GM13976 (cell line): ENCODE measurements at regions of chr1 and their contacts with region 1.

Region 1: DNA sequence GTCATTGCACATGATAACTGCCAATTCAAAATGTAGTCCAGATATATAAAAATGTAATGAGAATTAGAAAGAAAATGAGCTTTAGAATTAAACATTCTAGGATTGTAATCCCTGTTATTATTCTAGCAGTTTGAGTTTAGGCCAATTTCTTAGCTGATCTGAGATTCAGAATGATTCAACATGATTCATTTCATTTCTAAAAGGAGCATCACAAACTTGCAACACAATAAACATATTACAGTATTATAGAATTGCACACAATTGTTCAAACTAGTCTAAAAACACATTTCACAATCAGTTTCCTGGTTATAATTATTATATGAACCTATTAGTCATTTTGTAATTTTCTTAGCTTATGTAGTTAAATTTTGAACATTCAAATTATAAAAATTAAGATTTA is 43.3 kb upstream of the TSHB start:
- DNase-seq: no peak
- CTCF ChIP-seq: no peak

Region 2: DNA sequence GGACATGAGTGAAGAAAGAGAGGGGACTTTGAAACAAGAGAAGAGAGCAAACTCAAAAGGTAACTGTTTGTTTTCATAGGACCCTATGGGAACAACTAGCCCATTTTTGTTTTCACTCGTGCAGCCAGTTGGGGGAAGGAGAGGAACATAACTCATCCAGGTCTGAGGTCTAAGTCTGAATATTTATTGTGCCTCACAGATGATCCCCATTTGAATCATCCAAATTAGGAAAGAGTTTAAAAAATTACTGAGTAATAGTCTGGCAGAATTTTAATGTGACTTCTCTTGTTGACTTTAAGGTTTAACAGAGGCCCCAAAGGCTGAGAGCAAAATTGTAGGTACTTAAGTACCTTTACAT is 113.4 kb after region 1 on chr1:
- in situ Hi-C with region 1: loop called (anchors 10 kb)
- DNase-seq: no peak
- CTCF ChIP-seq: no peak